Activated T-helper 1 cell treated with anti-CD3 and anti-CD28 coated beads, Interleukin-12 subunit alpha, Interleukin-12 subunit beta, Interleukin-2, Interleukin-4 antibody, amounts not matched to agents 30 ng/mL and 10 ng/mL and 1 ng/mL, durations not matched to agents 14 hours and 24 hours and 36 hours (primary cell): ENCODE measurements at regions of chr12 and their contacts with region 1.

Region 1: GRCh38 chr12:71840231-71840847 is 780 bp downstream of the TBC1D15 start:
- DNase-seq: peak; percentile 10
- H3K4me3 Mint-ChIP-seq: peak overlapping the region; percentile 90
- H3K27ac Mint-ChIP-seq: peak overlapping the region; percentile 92
- H3K4me1 Mint-ChIP-seq: peaks cover 34% of the 10 kb centered on the region
- H3K27me3 Mint-ChIP-seq: no peaks in the 10 kb centered on the region

Region 2: GRCh38 chr12:70365648-70366518 is 1474.5 kb before region 1 on chr12 and contains the start of gene KCNMB4:
- intact Hi-C with region 1: loop called (anchors 5 kb)
- DNase-seq: peak; percentile 71
- H3K4me3 Mint-ChIP-seq: peak within 1 kb of the TSS; percentile 87
- H3K27ac Mint-ChIP-seq: peak within 1 kb of the TSS; percentile 63
- H3K4me1 Mint-ChIP-seq: peaks cover 20% of the 10 kb centered on the region
- H3K27me3 Mint-ChIP-seq: peaks cover 44% of the 10 kb centered on the region
- total RNA-seq, gene KCNMB4: 0.17 and 0.80 TPM in 2 replicates

Region 3: GRCh38 chr12:71685914-71686665 is 154.2 kb before region 1 on chr12 and contains the start of gene TMEM19:
- intact Hi-C with region 1: loop called (anchors 1 kb)
- DNase-seq: peak; percentile 78
- H3K4me3 Mint-ChIP-seq: peak within 1 kb of the TSS; percentile 94
- H3K27ac Mint-ChIP-seq: peak within 1 kb of the TSS; percentile 93
- H3K4me1 Mint-ChIP-seq: peaks cover 23% of the 10 kb centered on the region
- H3K27me3 Mint-ChIP-seq: no peaks in the 10 kb centered on the region
- total RNA-seq, gene TMEM19: 10.6 and 11.3 TPM in 2 replicates

Region 4: DNA sequence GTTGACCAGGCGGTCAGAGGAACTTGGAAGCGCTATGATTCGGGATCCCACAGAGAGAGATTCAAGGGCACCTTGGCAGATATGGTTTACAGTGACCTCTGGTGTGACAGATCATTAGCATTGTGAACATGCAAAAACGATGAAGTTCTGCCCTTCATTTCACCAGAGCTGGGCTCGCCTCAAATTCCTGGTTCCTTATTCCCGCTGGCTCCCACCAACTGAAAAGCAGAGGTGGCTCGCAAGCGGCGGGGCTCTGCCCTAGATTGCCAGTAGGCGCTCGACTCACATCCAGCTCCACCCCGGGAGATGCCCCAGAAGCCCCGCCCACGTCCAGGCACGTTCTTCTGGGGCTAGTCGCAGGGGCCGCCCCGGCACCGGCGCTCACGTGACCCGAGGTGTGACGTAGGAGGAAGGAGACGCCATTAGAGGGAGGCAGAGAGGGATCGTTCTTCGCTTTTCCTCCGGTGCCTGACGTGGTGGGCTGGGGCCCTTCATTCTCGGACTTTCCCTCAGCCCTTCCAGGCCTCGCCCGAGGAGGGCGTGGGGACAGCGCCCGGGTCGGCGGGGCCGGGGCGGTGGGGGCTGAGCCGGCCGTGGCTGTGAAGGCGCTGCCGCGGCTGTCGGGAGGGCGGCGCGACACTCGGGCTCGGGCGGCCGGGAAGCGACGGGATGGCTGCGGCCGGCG is 85.7 kb before region 1 on chr12 and contains the start of gene RAB21:
- intact Hi-C with region 1: loop called (anchors 1 kb)
- DNase-seq: peak; percentile 97
- H3K4me3 Mint-ChIP-seq: peak within 1 kb of the TSS; percentile 93
- H3K27ac Mint-ChIP-seq: peak within 1 kb of the TSS; percentile 97
- H3K4me1 Mint-ChIP-seq: peaks cover 22% of the 10 kb centered on the region
- H3K27me3 Mint-ChIP-seq: peaks cover 27% of the 10 kb centered on the region
- total RNA-seq, gene RAB21: 100 and 105 TPM in 2 replicates

Region 5: GRCh38 chr12:71780237-71780822 is 60.0 kb before region 1 on chr12:
- intact Hi-C with region 1: loop called (anchors 2 kb)
- DNase-seq: no peak
- H3K4me3 Mint-ChIP-seq: no peak overlapping the region
- H3K27ac Mint-ChIP-seq: no peak overlapping the region
- H3K4me1 Mint-ChIP-seq: peaks cover 11% of the 10 kb centered on the region
- H3K27me3 Mint-ChIP-seq: no peaks in the 10 kb centered on the region

Region 6: DNA sequence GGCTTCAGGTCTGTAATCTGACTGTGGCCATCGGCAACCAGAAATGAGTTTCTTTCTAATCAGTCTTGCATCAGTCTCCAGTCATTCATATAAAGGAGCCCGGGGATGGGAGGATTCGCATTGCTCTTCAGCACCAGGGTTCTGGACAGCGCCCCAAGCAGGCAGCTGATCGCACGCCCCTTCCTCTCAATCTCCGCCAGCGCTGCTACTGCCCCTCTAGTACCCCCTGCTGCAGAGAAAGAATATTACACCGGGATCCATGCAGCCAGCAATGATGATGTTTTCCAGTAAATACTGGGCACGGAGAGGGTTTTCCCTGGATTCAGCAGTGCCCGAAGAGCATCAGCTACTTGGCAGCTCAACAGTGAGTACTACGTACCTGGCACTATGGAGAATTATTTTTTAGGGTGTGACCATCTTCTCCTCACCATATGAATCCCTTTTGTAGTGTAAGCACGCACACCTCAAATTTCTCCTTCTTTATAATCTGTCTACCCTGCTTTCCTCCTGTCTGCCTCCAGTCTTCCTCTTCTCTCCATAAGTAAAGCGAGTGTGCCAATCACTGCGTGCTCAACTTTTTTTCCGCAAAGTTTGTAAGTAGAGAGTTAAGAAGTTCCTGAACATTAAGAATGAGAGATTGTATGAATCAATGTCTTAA is 98.5 kb after region 1 on chr12 and contains the start of gene TPH2:
- intact Hi-C with region 1: loop called (anchors 1 kb)
- DNase-seq: peak; percentile 51
- H3K4me3 Mint-ChIP-seq: no peak within 1 kb of the TSS
- H3K27ac Mint-ChIP-seq: peak within 1 kb of the TSS; percentile 1
- H3K4me1 Mint-ChIP-seq: peaks cover 18% of the 10 kb centered on the region
- H3K27me3 Mint-ChIP-seq: peaks cover 28% of the 10 kb centered on the region
- total RNA-seq, gene TPH2: not detected in 2 replicates